HepG2 (cell line): ENCODE measurements at regions of chr7 and their contacts with region 1.

Region 1: DNA sequence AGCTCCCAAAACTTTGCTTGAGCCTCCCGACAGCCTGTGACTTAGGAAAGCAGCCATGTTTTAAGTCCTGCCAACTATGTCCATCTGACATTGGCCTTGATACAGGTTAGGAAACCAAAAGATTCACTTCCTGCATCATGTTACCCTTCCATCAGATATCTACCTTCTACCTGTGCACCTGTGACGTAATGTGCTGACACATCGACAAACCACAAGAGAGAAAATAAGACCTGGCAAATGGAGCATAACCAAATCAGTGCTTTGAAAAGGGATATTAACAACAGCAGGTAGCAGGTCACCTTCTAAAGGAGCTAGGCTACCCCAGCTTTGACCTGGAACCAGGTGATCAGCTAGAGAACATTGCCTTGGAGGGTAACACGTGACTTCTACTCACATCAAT is 14.8 kb upstream of the PRR15 start:
- DNase-seq: no peak
- ATAC-seq: no peak
- H3K4me3 ChIP-seq: no peak overlapping the region
- H3K27ac ChIP-seq: no peak overlapping the region
- H3K4me1 ChIP-seq: no peaks in the 10 kb centered on the region
- H3K27me3 ChIP-seq: no peaks in the 10 kb centered on the region
- CTCF ChIP-seq: no peak
- EP300 ChIP-seq: no peak
- POLR2A ChIP-seq: no peak
- RAD21 ChIP-seq: no peak

Region 2: GRCh38 chr7:29494350-29494749 is 54.5 kb before region 1 on chr7:
- CTCF ChIA-PET with region 1: no interaction called
- POLR2A ChIA-PET with region 1: no interaction called
- in situ Hi-C with region 1: no loop called
- intact Hi-C with region 1: loop called (anchors 10 kb)
- DNase-seq: no peak
- ATAC-seq: no peak
- H3K4me3 ChIP-seq: no peak overlapping the region
- H3K27ac ChIP-seq: no peak overlapping the region
- H3K4me1 ChIP-seq: peaks cover 48% of the 10 kb centered on the region
- H3K27me3 ChIP-seq: no peaks in the 10 kb centered on the region
- CTCF ChIP-seq: no peak
- EP300 ChIP-seq: no peak
- POLR2A ChIP-seq: no peak
- RAD21 ChIP-seq: no peak